Endothelial cell of umbilical vein (primary cell): ENCODE measurements at regions of chr7 and their contacts with region 1.

Region 1: GRCh38 chr7:56051339-56052191 is at the starts of genes CCT6A and PSPH:
- DNase-seq: peak; percentile 99
- H3K4me3 ChIP-seq: peak within 1 kb of the TSS; percentile 86 to 99 (median 88)
- H3K27ac ChIP-seq: peak within 1 kb of the TSS; percentile 83
- H3K4me1 ChIP-seq: peaks cover 45% of the 10 kb centered on the region
- H3K27me3 ChIP-seq: no peaks in the 10 kb centered on the region
- CTCF ChIP-seq: no peak
- POLR2A ChIP-seq: peak; percentile 88
- total RNA-seq, gene CCT6A: 210 and 221 TPM in 2 replicates
- total RNA-seq, gene PSPH: 20.3 and 24.2 TPM in 2 replicates

Region 2: GRCh38 chr7:55572378-55573233 is 479.0 kb before region 1 on chr7 and contains the start of gene VOPP1:
- CTCF ChIA-PET with region 1: no interaction called
- POLR2A ChIA-PET with region 1: no interaction called
- dilution Hi-C with region 1: no loop called
- intact Hi-C with region 1: loop called (anchors 1 kb)
- DNase-seq: peak; percentile 61
- H3K4me3 ChIP-seq: peak within 1 kb of the TSS; percentile 89 to 99 (median 97)
- H3K27ac ChIP-seq: peak within 1 kb of the TSS; percentile 97
- H3K4me1 ChIP-seq: peaks cover 55% of the 10 kb centered on the region
- H3K27me3 ChIP-seq: no peaks in the 10 kb centered on the region
- CTCF ChIP-seq: no peak
- POLR2A ChIP-seq: peak; percentile 41
- total RNA-seq, gene VOPP1: 154 and 159 TPM in 2 replicates

Region 3: GRCh38 chr7:55964261-55965099 is 87.1 kb before region 1 on chr7 and contains the start of gene NIPSNAP2:
- CTCF ChIA-PET with region 1: interaction called, 9 read pairs
- POLR2A ChIA-PET with region 1: interaction called, 3 read pairs
- dilution Hi-C with region 1: no loop called
- intact Hi-C with region 1: loop called (anchors 1 kb)
- DNase-seq: peak; percentile 56
- H3K4me3 ChIP-seq: peak within 1 kb of the TSS; percentile 68 to 80 (median 77)
- H3K27ac ChIP-seq: peak within 1 kb of the TSS; percentile 64
- H3K4me1 ChIP-seq: no peaks in the 10 kb centered on the region
- H3K27me3 ChIP-seq: no peaks in the 10 kb centered on the region
- CTCF ChIP-seq: peak; percentile 19 to 58
- POLR2A ChIP-seq: peak; percentile 78
- total RNA-seq, gene NIPSNAP2: 50.5 and 53.6 TPM in 2 replicates

Region 4: GRCh38 chr7:56009695-56010094 is 41.9 kb before region 1 on chr7:
- CTCF ChIA-PET with region 1: interaction called, 6 read pairs
- POLR2A ChIA-PET with region 1: interaction called, 5 read pairs
- dilution Hi-C with region 1: no loop called
- intact Hi-C with region 1: loop called (anchors 1 kb)
- DNase-seq: no peak
- H3K4me3 ChIP-seq: no peak overlapping the region
- H3K27ac ChIP-seq: no peak overlapping the region
- H3K4me1 ChIP-seq: no peaks in the 10 kb centered on the region
- H3K27me3 ChIP-seq: no peaks in the 10 kb centered on the region
- CTCF ChIP-seq: no peak
- POLR2A ChIP-seq: no peak

Region 5: DNA sequence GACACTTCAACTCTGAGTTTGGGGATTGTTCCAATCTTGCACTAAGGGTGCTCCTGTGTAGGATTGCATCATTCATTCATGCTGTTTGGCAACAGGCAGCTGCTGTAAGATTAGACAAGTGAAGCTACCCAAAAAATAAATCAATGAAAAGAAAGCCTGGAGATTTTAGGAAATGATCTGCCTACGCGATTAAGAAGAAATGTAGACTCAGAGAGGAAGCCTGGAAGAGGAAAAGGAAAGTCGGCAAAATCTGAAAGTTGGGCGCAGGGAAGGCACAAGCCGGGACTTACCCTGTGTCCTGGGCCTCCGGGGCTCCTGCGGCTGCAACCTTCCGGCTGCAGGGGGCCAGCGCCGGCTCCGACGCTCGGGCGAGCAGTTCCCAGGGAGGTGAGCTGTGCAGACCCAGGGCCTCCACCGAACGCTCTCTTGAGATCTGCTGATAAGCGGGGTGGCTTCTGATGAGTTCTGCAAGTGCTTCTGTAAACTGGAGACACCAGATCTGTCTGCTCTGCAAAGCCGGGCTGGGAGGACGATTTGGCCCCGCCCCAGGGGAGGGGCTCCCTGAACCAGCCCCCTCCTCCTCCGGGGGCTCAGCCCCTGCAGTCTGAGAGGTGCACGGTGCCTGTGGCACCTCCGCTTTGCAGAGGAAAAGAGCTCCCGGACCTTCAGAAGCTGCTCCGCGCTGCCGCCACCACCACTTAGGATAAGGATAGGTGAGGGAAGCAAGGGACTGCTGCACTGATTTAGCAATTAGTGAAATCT is 17.7 kb before region 1 on chr7:
- CTCF ChIA-PET with region 1: interaction called, 12 read pairs
- POLR2A ChIA-PET with region 1: interaction called, 13 read pairs
- dilution Hi-C with region 1: no loop called
- intact Hi-C with region 1: loop called (anchors 1 kb)
- DNase-seq: peak; percentile 83
- H3K4me3 ChIP-seq: peak overlapping the region; percentile 61 to 88 (median 76)
- H3K27ac ChIP-seq: no peak overlapping the region
- H3K4me1 ChIP-seq: peaks cover 5% of the 10 kb centered on the region
- H3K27me3 ChIP-seq: no peaks in the 10 kb centered on the region
- CTCF ChIP-seq: peak in 1 of 2 donors; percentile 49
- POLR2A ChIP-seq: peak; percentile 38

Region 6: GRCh38 chr7:56079450-56080185 is 28.1 kb after region 1 on chr7:
- CTCF ChIA-PET with region 1: interaction called, 17 read pairs
- POLR2A ChIA-PET with region 1: interaction called, 8 read pairs
- dilution Hi-C with region 1: no loop called
- intact Hi-C with region 1: no loop called
- DNase-seq: peak; percentile 93
- H3K4me3 ChIP-seq: no peak overlapping the region
- H3K27ac ChIP-seq: peak overlapping the region; percentile 73
- H3K4me1 ChIP-seq: peaks cover 26% of the 10 kb centered on the region
- H3K27me3 ChIP-seq: no peaks in the 10 kb centered on the region
- CTCF ChIP-seq: peak; percentile 89 to 92
- POLR2A ChIP-seq: no peak

Region 7: DNA sequence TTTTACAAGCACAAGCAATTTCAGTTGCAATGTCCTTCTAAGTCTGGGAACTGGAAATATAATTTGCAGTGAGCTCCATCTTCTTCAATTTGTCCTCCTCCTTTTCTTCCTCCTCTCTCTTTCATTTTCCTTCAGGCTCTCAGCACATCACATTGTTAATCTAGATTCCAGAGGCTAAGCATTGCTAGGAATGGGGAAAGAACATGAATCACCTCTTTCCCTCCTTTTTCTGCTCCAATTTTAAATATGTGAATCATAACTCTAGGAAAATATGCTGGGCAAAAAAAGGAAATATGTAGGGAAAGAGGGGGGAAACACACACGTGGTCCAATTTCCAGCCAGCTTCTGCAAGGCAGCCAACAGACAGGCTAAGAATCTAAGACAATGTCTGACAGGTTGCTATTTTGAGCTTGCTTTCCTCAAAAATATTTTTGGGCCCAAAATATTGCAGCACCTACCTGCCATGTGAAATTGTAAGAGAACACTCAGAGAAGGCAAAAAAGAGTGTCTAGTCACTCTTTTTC is 137.3 kb after region 1 on chr7:
- CTCF ChIA-PET with region 1: no interaction called
- POLR2A ChIA-PET with region 1: no interaction called
- dilution Hi-C with region 1: no loop called
- intact Hi-C with region 1: no loop called
- DNase-seq: no peak
- H3K4me3 ChIP-seq: no peak overlapping the region
- H3K27ac ChIP-seq: no peak overlapping the region
- H3K4me1 ChIP-seq: no peaks in the 10 kb centered on the region
- H3K27me3 ChIP-seq: no peaks in the 10 kb centered on the region
- CTCF ChIP-seq: no peak
- POLR2A ChIP-seq: no peak

Region 8: DNA sequence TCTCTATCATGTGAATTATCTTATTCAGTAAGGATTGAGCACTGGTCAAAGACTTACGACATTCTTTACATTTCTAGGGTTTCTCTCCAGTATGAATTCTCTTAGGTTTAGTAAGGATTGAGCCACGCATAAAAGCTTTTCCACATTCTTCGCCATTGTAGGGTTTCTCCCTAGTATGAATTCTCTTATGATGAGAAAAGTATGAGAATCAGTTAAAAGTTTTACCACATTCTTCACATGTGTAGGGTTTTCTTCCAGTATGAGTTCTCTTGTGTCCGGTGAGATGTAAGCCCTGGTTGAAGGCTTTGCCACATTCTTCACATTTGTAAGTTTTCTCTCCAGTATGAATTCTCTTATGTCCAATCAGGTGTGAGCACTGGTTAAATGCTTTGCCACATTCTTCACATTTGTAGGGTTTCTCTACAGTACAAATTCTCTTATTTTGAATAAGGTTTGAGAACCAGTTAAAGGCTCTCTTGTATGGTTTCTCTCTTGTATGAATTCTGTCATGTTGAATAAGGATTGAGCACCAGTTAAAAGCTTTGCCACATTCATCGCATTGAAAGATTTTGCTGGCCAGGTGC is 634.8 kb after region 1 on chr7:
- CTCF ChIA-PET with region 1: no interaction called
- POLR2A ChIA-PET with region 1: no interaction called
- dilution Hi-C with region 1: no loop called
- intact Hi-C with region 1: no loop called
- DNase-seq: no peak
- H3K4me3 ChIP-seq: no peak overlapping the region
- H3K27ac ChIP-seq: no peak overlapping the region
- H3K4me1 ChIP-seq: no peaks in the 10 kb centered on the region
- H3K27me3 ChIP-seq: no peaks in the 10 kb centered on the region
- CTCF ChIP-seq: no peak
- POLR2A ChIP-seq: no peak